ENCODE measurements at regions of chr1 and their contacts with region 1.

Region 1: GRCh38 chr1:166166695-166167571 is at the start of gene FAM78B:
- DNase-seq: peak; percentile 84 to 92
- ATAC-seq: peak; percentile 93 to 97 (median 96)
- H3K4me3 ChIP-seq: peak within 1 kb of the TSS; percentile 76
- H3K27ac ChIP-seq: peak within 1 kb of the TSS; percentile 77
- H3K4me1 ChIP-seq: peaks cover 14% of the 10 kb centered on the region
- H3K27me3 ChIP-seq: no peaks in the 10 kb centered on the region
- CTCF ChIP-seq: peak; percentile 1
- total RNA-seq, gene FAM78B: 2.5 to 9.8 (median 6.5) TPM

Region 2: GRCh38 chr1:165928075-165928731 is 238.7 kb before region 1 on chr1:
- intact Hi-C with region 1: loop called (anchors 10 kb)
- DNase-seq: no peak
- ATAC-seq: peak; percentile 55 to 84 (median 68)
- H3K4me3 ChIP-seq: no peak overlapping the region
- H3K27ac ChIP-seq: no peak overlapping the region
- H3K4me1 ChIP-seq: no peaks in the 10 kb centered on the region
- H3K27me3 ChIP-seq: no peaks in the 10 kb centered on the region
- CTCF ChIP-seq: peak; percentile 64

Region 3: GRCh38 chr1:165933446-165934178 is 233.3 kb before region 1 on chr1:
- intact Hi-C with region 1: loop called (anchors 10 kb)
- DNase-seq: no peak
- ATAC-seq: no peak
- H3K4me3 ChIP-seq: no peak overlapping the region
- H3K27ac ChIP-seq: no peak overlapping the region
- H3K4me1 ChIP-seq: no peaks in the 10 kb centered on the region
- H3K27me3 ChIP-seq: no peaks in the 10 kb centered on the region
- CTCF ChIP-seq: no peak

Region 4: DNA sequence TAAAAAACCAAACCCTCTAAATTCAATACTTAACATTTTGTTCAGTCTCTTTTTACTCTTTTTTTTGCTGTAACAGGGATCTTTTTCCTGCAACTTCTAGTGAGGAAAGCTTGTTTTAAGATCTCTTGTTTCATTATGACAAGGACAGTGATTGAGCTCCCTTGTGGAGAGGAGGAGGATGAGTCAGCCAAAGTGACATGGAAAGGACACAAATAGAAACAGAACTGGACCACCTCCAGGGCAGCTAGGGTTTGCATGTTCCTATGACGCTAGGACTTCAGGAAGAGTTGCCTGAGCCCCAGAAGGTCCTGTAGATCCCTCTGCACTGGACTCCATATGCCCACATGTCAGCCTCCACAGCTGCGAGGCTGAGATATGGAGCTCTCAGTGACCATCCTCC is 212.5 kb after region 1 on chr1:
- intact Hi-C with region 1: loop called in 1 of 2 experiments (anchors 5 kb)
- DNase-seq: peak; percentile 41 to 76
- ATAC-seq: peak; percentile 95 to 100 (median 100)
- H3K4me3 ChIP-seq: peak overlapping the region; percentile 19
- H3K27ac ChIP-seq: peak overlapping the region; percentile 87
- H3K4me1 ChIP-seq: peaks cover 18% of the 10 kb centered on the region
- H3K27me3 ChIP-seq: no peaks in the 10 kb centered on the region
- CTCF ChIP-seq: no peak

Region 5: GRCh38 chr1:166432655-166433054 is 265.7 kb after region 1 on chr1:
- intact Hi-C with region 1: loop called in 1 of 2 experiments (anchors 10 kb)
- DNase-seq: no peak
- ATAC-seq: no peak
- H3K4me3 ChIP-seq: no peak overlapping the region
- H3K27ac ChIP-seq: no peak overlapping the region
- H3K4me1 ChIP-seq: no peaks in the 10 kb centered on the region
- H3K27me3 ChIP-seq: no peaks in the 10 kb centered on the region
- CTCF ChIP-seq: no peak